Keratinocyte (primary cell): ENCODE measurements at regions of chr1 and their contacts with region 1.

Region 1: GRCh38 chr1:153749408-153750005 is 21.7 kb downstream of the INTS3 start:
- DNase-seq: peak; percentile 32
- H3K4me3 ChIP-seq: no peak overlapping the region
- H3K27ac ChIP-seq: no peak overlapping the region
- H3K4me1 ChIP-seq: no peaks in the 10 kb centered on the region
- H3K27me3 ChIP-seq: no peaks in the 10 kb centered on the region
- CTCF ChIP-seq: peak; percentile 95 to 99 (median 97)

Region 2: DNA sequence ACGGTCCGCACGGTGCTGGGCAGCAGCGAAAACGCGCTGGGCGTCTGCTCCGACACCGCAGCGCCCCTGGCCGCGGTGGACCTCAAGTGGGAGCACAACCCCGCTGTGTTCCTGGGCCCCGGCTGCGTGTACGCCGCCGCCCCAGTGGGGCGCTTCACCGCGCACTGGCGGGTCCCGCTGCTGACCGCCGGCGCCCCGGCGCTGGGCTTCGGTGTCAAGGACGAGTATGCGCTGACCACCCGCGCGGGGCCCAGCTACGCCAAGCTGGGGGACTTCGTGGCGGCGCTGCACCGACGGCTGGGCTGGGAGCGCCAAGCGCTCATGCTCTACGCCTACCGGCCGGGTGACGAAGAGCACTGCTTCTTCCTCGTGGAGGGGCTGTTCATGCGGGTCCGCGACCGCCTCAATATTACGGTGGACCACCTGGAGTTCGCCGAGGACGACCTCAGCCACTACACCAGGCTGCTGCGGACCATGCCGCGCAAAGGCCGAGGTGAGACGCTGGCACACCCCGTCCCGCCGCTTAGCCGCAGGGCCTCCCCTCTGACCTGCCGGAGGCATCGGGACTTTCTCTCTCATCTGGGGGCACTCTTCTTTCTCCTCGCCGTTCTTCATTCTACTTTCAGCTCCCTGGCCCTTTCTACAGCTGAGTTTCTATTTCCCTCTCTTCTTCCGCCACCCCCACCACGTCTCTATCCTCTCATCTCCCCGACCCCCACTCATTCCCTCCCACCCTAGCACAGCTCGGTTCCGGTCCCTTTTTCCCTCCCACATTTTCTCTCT is 70.0 kb before region 1 on chr1:
- dilution Hi-C with region 1: loop called (anchors 10 kb)
- DNase-seq: no peak
- H3K4me3 ChIP-seq: peak overlapping the region in 2 of 3 experiments; percentile 48 to 54
- H3K27ac ChIP-seq: no peak overlapping the region
- H3K4me1 ChIP-seq: peaks cover 11% of the 10 kb centered on the region
- H3K27me3 ChIP-seq: peaks cover 42% of the 10 kb centered on the region
- CTCF ChIP-seq: peak in 1 of 3 experiments; percentile 9

Region 3: GRCh38 chr1:153849487-153850185 is 100.1 kb after region 1 on chr1:
- dilution Hi-C with region 1: no loop called
- DNase-seq: no peak
- H3K4me3 ChIP-seq: no peak overlapping the region
- H3K27ac ChIP-seq: no peak overlapping the region
- H3K4me1 ChIP-seq: no peaks in the 10 kb centered on the region
- H3K27me3 ChIP-seq: no peaks in the 10 kb centered on the region
- CTCF ChIP-seq: no peak